HEK293 (cell line): ENCODE measurements at regions of chr16 and their contacts with region 1.

Region 1: DNA sequence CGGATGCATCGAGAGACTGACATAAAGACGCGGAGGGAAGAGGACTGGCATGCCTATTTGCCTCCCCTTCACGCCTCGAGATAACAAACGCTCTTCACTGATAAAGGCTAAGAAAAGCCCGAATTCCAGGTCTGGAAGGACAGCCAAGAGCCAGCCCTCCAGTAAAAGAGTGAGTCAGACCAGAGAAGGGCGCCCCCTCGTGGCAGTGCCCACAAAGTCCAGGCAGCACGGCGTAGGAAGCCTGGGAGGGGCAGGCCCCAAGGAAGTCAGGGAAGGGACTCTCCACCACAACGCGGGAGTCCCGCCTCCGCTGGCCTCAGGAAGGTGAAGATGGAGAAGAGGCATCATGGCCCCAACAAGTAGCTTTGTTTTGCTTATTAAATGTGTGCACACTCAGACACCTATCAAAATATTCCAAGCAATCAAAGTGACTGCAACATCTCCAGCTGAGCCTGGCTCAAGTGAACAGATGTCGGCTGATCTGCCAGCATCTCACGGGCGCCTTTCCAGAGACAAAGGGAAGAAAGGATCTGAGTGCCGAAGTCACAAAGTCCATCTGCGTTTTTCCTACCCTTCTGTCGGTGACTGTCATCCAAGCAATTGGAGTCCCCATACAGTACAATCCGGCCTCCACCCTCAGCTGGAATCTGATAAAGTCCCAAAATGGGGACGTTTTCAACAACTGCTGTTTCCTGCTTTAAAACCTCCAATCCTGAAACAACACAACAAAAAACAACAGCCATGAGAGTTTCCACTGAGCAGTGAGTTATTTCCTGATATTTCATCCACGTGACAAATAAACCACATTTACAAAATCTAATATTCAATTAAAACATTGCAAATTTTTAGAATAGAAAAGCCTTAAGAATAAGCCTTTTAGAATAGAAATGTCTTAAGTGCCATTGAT is 20.4 kb upstream of the SLC38A8 start:
- H3K4me3 ChIP-seq: no peak overlapping the region
- H3K27ac ChIP-seq: no peak overlapping the region
- H3K4me1 ChIP-seq: no peaks in the 10 kb centered on the region
- CTCF ChIP-seq: peak; percentile 63

Region 2: GRCh38 chr16:83926726-83927397 is 136.1 kb before region 1 on chr16:
- CTCF ChIA-PET with region 1: interaction called, 29 read pairs
- POLR2A ChIA-PET with region 1: no interaction called
- H3K4me3 ChIP-seq: peak overlapping the region; percentile 29
- H3K27ac ChIP-seq: no peak overlapping the region
- H3K4me1 ChIP-seq: no peaks in the 10 kb centered on the region
- CTCF ChIP-seq: peak; percentile 94

Region 3: DNA sequence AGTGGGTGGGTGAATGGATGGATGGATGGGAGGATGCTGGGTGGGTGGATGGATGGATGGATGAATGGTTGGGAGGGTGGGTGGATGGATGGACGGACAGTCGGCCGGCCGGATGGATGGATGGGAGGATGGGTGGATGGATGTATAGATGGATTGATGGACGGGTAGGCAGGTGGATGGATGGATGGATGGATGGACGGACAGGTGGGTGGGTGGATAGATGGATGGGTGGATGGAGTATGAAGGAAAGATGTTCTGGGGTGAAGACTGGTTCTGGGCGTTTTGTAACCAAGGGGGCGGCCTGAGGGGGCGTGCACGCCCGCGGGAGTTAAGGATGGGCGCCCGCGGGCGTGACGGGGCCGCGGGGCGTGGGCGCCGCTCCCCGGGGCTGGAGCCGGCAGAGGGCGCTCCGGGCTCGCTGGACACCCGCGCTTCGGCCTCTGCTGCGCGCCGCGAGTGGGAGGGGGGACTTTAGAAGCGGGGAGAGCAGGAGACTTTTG is 95.1 kb before region 1 on chr16 and contains the start of gene NECAB2:
- CTCF ChIA-PET with region 1: interaction called, 46 read pairs
- POLR2A ChIA-PET with region 1: no interaction called
- H3K4me3 ChIP-seq: peak within 1 kb of the TSS; percentile 26
- H3K27ac ChIP-seq: no peak within 1 kb of the TSS
- H3K4me1 ChIP-seq: no peaks in the 10 kb centered on the region
- CTCF ChIP-seq: 0 out of 2 replicates have a peak, but pooled peaks have one; percentile 31

Region 4: GRCh38 chr16:84079664-84080063 is 16.7 kb after region 1 on chr16:
- CTCF ChIA-PET with region 1: interaction called, 19 read pairs
- POLR2A ChIA-PET with region 1: no interaction called
- H3K4me3 ChIP-seq: no peak overlapping the region
- H3K27ac ChIP-seq: no peak overlapping the region
- H3K4me1 ChIP-seq: no peaks in the 10 kb centered on the region
- CTCF ChIP-seq: no peak

Region 5: DNA sequence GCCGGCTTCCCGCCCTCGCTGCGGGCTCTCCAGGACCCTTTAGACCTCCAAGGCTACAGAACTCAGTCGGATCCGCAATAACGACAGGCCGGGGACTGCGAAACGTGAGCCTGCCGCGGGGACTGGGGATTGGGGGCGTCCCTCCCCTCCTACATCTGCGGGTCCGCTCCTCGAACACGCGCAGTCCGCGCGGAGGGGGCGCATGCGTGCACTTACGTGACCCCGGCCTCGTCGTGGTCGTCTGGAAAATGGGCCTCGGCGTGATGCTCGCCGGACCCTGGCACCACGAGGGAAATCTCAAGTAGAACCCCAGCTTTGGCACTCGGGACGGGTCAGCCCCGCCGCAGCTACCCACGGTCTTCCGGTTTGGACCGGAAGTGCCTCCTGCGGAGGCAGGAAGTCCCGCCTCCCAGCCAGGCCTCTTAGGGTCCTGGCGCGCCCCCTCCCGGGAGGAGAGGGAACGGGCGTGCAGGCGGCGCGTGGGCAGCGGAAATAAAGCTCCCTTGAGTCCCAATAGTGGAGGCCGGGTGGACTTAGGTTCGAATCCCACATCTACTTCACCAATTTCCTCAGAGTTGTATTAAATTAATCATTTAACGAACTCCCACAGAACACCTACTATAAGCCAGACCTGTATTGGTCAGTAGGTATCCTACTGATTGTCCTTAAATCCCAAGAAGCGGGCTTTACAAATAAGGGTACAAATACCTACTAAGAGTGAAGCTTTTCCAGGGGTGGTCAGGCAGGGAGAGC is 123.9 kb after region 1 on chr16 and contains the start of gene TAF1C:
- CTCF ChIA-PET with region 1: interaction called, 12 read pairs
- POLR2A ChIA-PET with region 1: no interaction called
- H3K4me3 ChIP-seq: peak within 1 kb of the TSS; percentile 93
- H3K27ac ChIP-seq: peak within 1 kb of the TSS; percentile 48; the same call in 1 of the 2 replicates
- H3K4me1 ChIP-seq: no peaks in the 10 kb centered on the region
- CTCF ChIP-seq: peak; percentile 94